Activated CD4-positive, alpha-beta T cell treated with anti-CD3 and anti-CD28 coated beads, Interleukin-2, amount 10 ng/mL, durations not matched to agents 24 days and 14 days (primary cell): ENCODE measurements at regions of chr1 and their contacts with region 1.

Region 1: GRCh38 chr1:169694304-169695075 is 16.9 kb downstream of the SELL start:
- DNase-seq: peak; percentile 88
- H3K4me3 Mint-ChIP-seq: peak overlapping the region; percentile 26
- H3K27ac Mint-ChIP-seq: peak overlapping the region; percentile 79
- H3K4me1 Mint-ChIP-seq: peaks cover 84% of the 10 kb centered on the region
- H3K27me3 Mint-ChIP-seq: no peaks in the 10 kb centered on the region

Region 2: GRCh38 chr1:169392406-169392805 is 302.1 kb before region 1 on chr1:
- intact Hi-C with region 1: no loop called
- DNase-seq: no peak
- H3K4me3 Mint-ChIP-seq: no peak overlapping the region
- H3K27ac Mint-ChIP-seq: no peak overlapping the region
- H3K4me1 Mint-ChIP-seq: peaks cover 10% of the 10 kb centered on the region
- H3K27me3 Mint-ChIP-seq: no peaks in the 10 kb centered on the region

Region 3: DNA sequence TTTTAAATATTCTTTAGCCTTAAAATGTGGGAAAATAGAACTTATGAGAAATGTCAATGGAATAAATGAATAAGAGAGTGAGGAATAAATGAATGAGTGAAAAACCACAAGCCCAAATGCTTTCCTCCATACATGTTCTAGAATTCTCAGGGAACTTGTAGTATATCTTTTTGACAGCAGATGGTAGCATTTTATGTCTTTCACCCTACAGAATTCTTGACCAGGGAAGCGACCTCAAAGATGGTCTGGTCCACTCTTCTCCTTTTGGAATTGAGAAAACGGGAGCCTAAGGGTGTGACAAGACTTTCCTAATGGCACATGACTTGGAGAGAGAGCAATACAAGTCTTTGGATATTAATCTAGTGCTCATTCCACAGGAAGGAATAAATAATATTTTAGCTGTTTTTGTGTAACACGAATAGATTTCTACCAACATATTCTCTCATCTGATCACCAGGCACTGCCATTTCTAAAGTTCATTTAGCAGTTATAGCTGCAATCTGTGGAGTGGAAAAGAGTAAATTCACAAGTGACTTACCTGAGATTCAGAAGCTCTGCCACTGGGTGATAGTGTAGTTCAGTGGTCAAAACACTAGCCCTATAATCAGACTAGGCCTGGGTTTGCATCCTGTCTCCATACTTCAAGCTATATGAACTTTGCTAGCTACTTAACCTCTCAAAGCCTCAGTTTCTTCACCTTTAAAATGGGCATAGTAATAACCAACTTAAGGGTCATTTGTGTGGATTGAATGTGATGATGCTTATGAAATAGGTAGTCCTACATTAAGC is 93.2 kb before region 1 on chr1:
- intact Hi-C with region 1: loop called (anchors 1 kb)
- DNase-seq: peak; percentile 65
- H3K4me3 Mint-ChIP-seq: no peak overlapping the region
- H3K27ac Mint-ChIP-seq: peak overlapping the region; percentile 65
- H3K4me1 Mint-ChIP-seq: peaks cover 45% of the 10 kb centered on the region
- H3K27me3 Mint-ChIP-seq: no peaks in the 10 kb centered on the region

Region 4: DNA sequence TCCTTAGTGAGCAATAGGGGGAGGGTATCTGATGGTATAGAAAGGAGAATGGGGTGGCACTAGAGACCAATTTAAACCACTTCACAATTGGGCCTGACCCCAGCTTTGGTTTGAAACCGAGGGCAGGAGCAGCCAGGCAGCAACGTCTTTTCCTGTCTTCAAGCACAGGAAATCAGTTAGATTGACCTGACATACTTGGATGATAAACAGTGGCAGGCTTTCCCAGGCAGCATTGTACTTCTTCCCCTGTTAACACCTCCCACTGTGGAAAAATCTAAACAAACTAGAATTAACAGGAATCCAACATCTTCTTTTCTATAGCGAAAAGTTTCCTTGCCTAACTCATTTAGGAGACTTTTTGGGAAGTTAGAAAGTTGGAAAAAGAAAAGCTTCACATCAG is 23.7 kb before region 1 on chr1:
- intact Hi-C with region 1: loop called (anchors 2 kb)
- DNase-seq: peak; percentile 55
- H3K4me3 Mint-ChIP-seq: no peak overlapping the region
- H3K27ac Mint-ChIP-seq: peak overlapping the region; percentile 57
- H3K4me1 Mint-ChIP-seq: peaks cover 34% of the 10 kb centered on the region
- H3K27me3 Mint-ChIP-seq: no peaks in the 10 kb centered on the region

Region 5: GRCh38 chr1:169680377-169681019 is 14.0 kb before region 1 on chr1:
- intact Hi-C with region 1: loop called (anchors 1 kb)
- DNase-seq: no peak
- H3K4me3 Mint-ChIP-seq: peak overlapping the region; percentile 52
- H3K27ac Mint-ChIP-seq: peak overlapping the region; percentile 81
- H3K4me1 Mint-ChIP-seq: peaks cover 48% of the 10 kb centered on the region
- H3K27me3 Mint-ChIP-seq: no peaks in the 10 kb centered on the region

Region 6: DNA sequence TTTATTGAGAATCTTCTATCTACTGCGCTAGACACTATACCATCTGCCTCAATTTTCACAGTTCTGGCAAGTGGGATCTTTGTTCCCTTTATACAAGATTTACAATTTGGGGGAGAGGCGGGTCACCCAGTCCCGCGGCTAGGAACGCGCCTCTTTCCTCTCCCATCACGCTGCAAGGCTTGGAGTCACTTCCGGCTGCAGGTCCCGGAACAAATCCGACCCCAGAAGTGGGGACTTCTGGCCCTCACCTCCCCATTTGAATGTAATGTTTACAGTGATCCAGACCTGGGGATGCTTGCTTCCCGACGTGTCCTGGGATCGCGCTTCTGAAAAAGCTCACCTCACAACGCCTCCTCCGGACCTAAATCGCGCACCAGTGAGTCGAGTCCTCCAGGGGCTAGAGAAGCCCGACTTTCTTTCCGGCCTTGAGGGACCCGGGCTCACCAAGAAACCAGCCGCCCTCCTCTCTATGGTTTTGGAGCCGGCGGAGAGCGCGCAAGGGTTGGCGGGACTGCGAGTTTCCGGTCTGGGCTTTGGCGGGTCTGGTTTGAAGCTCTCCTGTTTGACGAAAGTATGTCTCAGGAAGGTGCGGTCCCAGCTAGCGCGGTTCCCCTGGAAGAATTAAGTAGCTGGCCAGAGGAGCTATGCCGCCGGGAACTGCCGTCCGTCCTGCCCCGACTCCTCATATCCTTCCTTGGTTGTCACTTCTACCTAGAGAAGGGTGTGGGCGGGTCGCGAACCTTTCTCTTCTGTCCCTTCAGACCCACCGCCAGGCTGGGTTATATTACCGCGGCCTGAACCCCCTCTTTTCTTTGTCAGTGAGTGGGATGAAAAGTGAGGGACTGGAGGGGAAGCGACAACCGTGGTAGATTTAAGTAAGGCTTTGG is 100.3 kb after region 1 on chr1 and contains the start of gene METTL18:
- intact Hi-C with region 1: loop called (anchors 2 kb)
- DNase-seq: peak; percentile 98
- H3K4me3 Mint-ChIP-seq: peak within 1 kb of the TSS; percentile 99
- H3K27ac Mint-ChIP-seq: peak within 1 kb of the TSS; percentile 97
- H3K4me1 Mint-ChIP-seq: peaks cover 45% of the 10 kb centered on the region
- H3K27me3 Mint-ChIP-seq: no peaks in the 10 kb centered on the region
- total RNA-seq, gene METTL18: 9.3 and 10.3 TPM in 2 replicates

Region 7: DNA sequence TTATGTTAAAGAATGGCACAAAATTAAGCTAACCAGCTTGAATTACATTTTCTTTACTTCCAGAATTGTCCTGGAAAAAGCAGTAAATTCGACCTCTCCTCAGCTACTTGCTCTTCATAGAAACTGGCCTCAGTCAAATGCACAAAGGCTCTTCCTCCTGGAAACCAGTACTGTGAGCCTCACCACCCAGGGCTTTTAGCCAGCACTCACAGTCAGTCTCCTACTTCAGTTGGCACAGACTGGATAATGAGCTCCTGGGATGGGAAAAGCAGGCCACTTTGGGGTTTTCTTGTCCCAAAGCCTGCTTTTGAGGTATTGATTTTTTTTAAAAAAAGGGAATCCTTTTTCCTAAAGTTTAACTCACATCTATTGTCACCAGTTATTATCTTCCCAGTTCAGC is 158.9 kb after region 1 on chr1:
- intact Hi-C with region 1: no loop called
- DNase-seq: no peak
- H3K4me3 Mint-ChIP-seq: no peak overlapping the region
- H3K27ac Mint-ChIP-seq: no peak overlapping the region
- H3K4me1 Mint-ChIP-seq: peaks cover 8% of the 10 kb centered on the region
- H3K27me3 Mint-ChIP-seq: no peaks in the 10 kb centered on the region

Region 8: DNA sequence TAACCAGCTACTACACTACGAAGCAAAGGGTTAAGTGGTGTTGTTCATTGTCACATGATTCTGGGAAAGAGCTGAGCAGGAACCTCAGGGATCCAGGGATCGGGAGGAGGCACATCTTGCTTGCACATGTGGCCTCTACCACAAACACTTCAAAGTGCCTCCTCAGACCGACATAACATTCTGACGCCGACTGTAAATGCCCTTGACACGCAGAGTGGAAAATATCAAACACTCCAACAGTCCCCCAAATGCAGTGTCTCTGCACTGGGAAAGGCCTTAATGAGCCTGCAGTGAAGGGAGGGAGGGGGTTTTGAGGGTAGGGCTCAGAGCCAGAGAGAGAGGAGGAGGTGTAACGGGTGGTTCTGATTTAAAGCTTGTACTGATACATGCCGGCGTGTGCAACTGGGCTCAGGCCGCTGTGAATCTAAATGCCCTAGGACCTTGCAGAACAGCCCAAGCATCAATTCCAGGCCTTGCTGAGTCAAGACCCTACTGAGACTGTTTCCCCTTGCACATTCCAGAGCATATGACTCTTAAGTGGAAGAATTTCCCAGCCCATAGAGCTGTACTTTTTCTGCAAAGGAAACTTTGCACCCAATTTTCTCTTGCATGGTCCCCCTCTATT is 615.0 kb after region 1 on chr1:
- intact Hi-C with region 1: no loop called
- DNase-seq: no peak
- H3K4me3 Mint-ChIP-seq: no peak overlapping the region
- H3K27ac Mint-ChIP-seq: no peak overlapping the region
- H3K4me1 Mint-ChIP-seq: no peaks in the 10 kb centered on the region
- H3K27me3 Mint-ChIP-seq: peaks cover 5% of the 10 kb centered on the region